ENCODE measurements at regions of chr6 and their contacts with region 1.

Region 1: GRCh38 chr6:143811501-143812157 is 31.5 kb upstream of the LTV1 start:
- DNase-seq: no peak
- ATAC-seq: no peak
- H3K4me3 ChIP-seq: no peak overlapping the region
- H3K4me3 Mint-ChIP-seq: no peak overlapping the region
- H3K27ac ChIP-seq: no peak overlapping the region
- H3K27ac Mint-ChIP-seq: no peak overlapping the region
- H3K4me1 ChIP-seq: no peaks in the 10 kb centered on the region
- H3K4me1 Mint-ChIP-seq: peaks cover 0 to 3% (median 2%) of the 10 kb centered on the region in 3 donors
- H3K27me3 ChIP-seq: no peaks in the 10 kb centered on the region
- H3K27me3 Mint-ChIP-seq: no peaks in the 10 kb centered on the region

Region 2: DNA sequence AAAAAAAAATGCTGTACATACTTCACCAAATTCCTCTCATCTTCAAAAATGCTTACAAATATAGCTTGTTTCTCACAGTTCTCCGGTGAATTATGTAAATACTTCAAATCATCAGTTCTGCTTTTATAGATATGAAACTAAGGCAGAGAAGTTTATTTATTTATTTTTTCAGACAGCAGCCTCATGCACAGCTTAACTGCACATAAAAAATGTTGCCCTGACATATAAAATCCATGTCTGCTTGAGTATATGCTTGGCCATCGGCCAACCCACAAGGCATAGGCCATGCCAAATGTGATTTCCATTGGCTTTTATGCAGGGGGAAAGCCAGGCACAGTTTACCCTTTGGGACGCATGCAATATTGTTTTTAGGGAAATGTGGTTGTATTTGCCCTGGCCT is 191.2 kb before region 1 on chr6:
- CTCF ChIA-PET with region 1: no interaction called
- POLR2A ChIA-PET with region 1: no interaction called
- DNase-seq: no peak
- ATAC-seq: no peak
- H3K4me3 ChIP-seq: no peak overlapping the region
- H3K4me3 Mint-ChIP-seq: no peak overlapping the region
- H3K27ac ChIP-seq: no peak overlapping the region
- H3K27ac Mint-ChIP-seq: no peak overlapping the region
- H3K4me1 ChIP-seq: no peaks in the 10 kb centered on the region
- H3K4me1 Mint-ChIP-seq: peaks cover 7 to 45% (median 24%) of the 10 kb centered on the region in 3 donors
- H3K27me3 ChIP-seq: no peaks in the 10 kb centered on the region
- H3K27me3 Mint-ChIP-seq: no peaks in the 10 kb centered on the region

Region 3: GRCh38 chr6:143822584-143823024 is 11.0 kb after region 1 on chr6:
- CTCF ChIA-PET with region 1: interaction called, 4 read pairs
- POLR2A ChIA-PET with region 1: interaction called in 1 of 2 experiments, 11 read pairs
- DNase-seq: no peak
- ATAC-seq: no peak
- H3K4me3 ChIP-seq: no peak overlapping the region
- H3K4me3 Mint-ChIP-seq: no peak overlapping the region
- H3K27ac ChIP-seq: no peak overlapping the region
- H3K27ac Mint-ChIP-seq: no peak overlapping the region
- H3K4me1 ChIP-seq: no peaks in the 10 kb centered on the region
- H3K4me1 Mint-ChIP-seq: no peaks in the 10 kb centered on the region
- H3K27me3 ChIP-seq: no peaks in the 10 kb centered on the region
- H3K27me3 Mint-ChIP-seq: no peaks in the 10 kb centered on the region

Region 4: GRCh38 chr6:144131248-144131709 is 319.6 kb after region 1 on chr6:
- CTCF ChIA-PET with region 1: no interaction called
- POLR2A ChIA-PET with region 1: no interaction called
- DNase-seq: no peak
- ATAC-seq: no peak
- H3K4me3 ChIP-seq: no peak overlapping the region
- H3K4me3 Mint-ChIP-seq: no peak overlapping the region
- H3K27ac ChIP-seq: no peak overlapping the region
- H3K27ac Mint-ChIP-seq: peak overlapping the region in 1 of 2 donors; percentile 23
- H3K4me1 ChIP-seq: peaks cover 0 to 3% of the 10 kb centered on the region in 2 experiments
- H3K4me1 Mint-ChIP-seq: peaks cover 9 to 16% (median 11%) of the 10 kb centered on the region in 3 donors
- H3K27me3 ChIP-seq: peaks cover 0 to 5% of the 10 kb centered on the region in 2 experiments
- H3K27me3 Mint-ChIP-seq: peaks cover 3% of the 10 kb centered on the region in 2 donors

Measured in T-cell (primary cell).